B cell (primary cell): ENCODE measurements at regions of chr5 and their contacts with region 1.

Region 1: DNA sequence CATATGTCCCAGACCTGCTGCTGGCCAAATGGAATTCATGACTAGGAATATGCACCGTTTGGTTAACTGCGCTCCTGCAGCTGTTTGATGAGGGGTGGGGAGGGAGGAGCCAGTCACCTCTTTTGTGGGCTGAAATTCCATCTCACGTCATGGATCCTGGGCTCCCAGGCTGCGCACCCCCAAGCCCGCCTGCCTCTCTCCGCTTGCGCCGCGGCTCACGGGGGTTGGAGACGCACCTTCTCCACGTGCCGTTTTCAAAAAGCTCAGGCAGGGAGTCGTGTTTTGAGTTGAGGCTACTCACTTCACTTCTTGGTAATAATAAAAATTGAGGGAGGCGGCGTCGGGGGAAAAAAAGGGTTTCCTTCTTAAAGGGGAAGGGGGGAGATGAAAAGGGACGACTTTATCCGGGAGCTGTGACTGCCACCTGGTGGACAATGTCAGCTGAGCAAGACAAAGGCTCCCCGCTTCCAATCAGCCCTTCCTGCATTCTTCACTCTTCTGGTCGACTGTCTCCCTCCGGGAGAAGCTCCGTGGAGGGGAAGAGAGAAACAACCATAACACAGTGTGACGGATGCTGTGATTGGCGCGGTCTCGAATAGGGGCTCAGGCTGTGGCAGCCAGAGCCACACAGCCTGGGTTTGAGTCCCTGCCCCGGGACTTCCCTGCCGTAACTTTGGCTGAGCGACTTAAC is 15.9 kb upstream of the C5orf47 start:
- DNase-seq: peak; percentile 87
- ATAC-seq: peak; percentile 85
- H3K4me3 ChIP-seq: peak overlapping the region in 4 of 5 experiments; percentile 14 to 50 (median 40)
- H3K4me3 Mint-ChIP-seq: peak overlapping the region; percentile 85
- H3K27ac ChIP-seq: no peak overlapping the region
- H3K27ac Mint-ChIP-seq: no peak overlapping the region
- H3K4me1 ChIP-seq: peaks cover 13 to 14% of the 10 kb centered on the region in 2 donors
- H3K4me1 Mint-ChIP-seq: peaks cover 11% of the 10 kb centered on the region
- H3K27me3 ChIP-seq: peaks cover 0 to 7% (median 3%) of the 10 kb centered on the region in 4 experiments
- H3K27me3 Mint-ChIP-seq: peaks cover 27% of the 10 kb centered on the region
- CTCF ChIP-seq: peak; percentile 87

Region 2: DNA sequence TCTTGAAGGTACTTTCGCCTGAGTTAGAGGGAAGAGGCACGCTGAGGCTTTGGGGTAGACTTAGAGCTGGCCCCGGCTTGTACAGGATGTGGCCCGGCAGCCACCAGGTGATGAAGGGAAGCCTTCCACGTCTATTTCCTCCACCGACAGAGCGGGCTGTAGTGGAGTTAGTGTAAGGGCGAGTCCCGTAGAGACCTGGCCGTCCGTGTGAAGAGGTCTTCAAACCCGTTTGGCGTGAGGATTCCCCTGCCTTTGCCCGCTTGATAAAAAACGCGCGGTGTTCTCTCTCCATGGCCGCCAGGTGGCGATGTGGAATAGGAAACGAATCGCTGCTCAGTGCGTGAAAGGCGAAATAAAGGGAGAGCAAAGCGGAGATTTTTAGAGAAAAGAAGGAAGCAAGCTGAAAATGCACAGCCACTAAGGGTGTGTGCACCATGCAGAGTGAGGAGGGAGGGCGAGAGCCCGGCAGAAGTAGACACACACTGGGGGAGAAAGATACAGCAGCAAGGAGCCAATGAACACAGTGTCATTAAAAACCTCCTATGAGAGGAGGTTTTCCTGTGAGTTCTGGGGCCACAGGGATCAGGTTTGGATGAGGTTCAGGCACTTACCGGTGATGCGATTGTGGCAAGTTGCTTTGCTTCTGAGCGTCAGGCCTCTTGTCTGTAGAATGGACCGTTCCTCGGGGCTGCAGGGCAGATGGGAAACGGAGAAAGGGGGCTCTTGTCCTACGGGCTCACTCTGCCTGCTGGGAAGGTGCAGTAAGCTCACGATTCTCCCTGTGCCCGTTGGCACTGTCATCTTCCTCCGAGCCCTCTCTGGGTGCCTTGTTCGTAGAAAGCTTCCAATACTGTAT is 679.0 kb before region 1 on chr5:
- CTCF ChIA-PET with region 1: interaction called, 26 read pairs
- POLR2A ChIA-PET with region 1: no interaction called
- intact Hi-C with region 1: no loop called
- DNase-seq: peak; percentile 70
- ATAC-seq: peak; percentile 53
- H3K4me3 ChIP-seq: no peak overlapping the region
- H3K4me3 Mint-ChIP-seq: peak overlapping the region; percentile 8
- H3K27ac ChIP-seq: no peak overlapping the region
- H3K27ac Mint-ChIP-seq: no peak overlapping the region
- H3K4me1 ChIP-seq: peaks cover 11 to 12% of the 10 kb centered on the region in 2 donors
- H3K4me1 Mint-ChIP-seq: peaks cover 10% of the 10 kb centered on the region
- H3K27me3 ChIP-seq: peaks cover 0 to 30% (median 14%) of the 10 kb centered on the region in 4 experiments
- H3K27me3 Mint-ChIP-seq: peaks cover 46% of the 10 kb centered on the region
- CTCF ChIP-seq: peak; percentile 88

Region 3: DNA sequence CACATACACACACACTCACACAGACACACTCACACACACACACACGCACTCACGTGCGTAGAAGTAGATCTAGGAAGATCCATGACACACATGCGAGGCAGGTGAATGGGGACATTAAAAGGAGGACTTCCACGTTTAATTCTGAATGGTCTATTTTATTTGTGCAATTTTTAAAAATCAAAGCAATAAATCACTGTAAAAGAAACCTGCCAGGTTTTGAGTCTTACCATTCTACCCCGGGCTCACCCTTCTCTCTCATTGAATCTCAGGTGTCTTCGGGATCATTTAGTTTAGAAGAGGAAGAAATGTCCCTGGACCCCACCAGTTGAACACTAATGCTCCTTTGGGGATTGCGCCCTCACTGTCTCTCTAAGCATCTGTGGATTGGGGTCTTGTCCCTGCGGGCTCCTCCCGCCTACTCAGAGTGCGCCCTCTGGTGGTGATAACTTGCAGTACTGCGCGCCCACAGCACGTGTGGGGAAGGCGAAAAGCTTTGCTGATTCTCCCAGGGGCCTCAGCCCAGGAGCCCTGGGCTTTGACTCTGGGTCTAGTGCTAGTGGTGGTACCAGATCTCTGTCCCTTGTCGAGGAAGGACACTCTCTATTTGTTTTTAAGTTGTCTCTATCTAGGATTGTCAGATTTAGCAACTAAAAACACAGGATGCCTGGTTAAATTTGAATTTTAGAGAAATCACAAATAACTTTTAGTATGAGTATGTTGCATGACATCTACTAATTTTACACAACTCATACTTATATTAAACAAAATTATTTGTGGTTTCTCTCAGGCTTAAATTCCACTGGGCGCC is 391.5 kb before region 1 on chr5:
- CTCF ChIA-PET with region 1: no interaction called
- POLR2A ChIA-PET with region 1: no interaction called
- intact Hi-C with region 1: no loop called
- DNase-seq: peak; percentile 38
- ATAC-seq: no peak
- H3K4me3 ChIP-seq: no peak overlapping the region
- H3K4me3 Mint-ChIP-seq: no peak overlapping the region
- H3K27ac ChIP-seq: no peak overlapping the region
- H3K27ac Mint-ChIP-seq: no peak overlapping the region
- H3K4me1 ChIP-seq: no peaks in the 10 kb centered on the region
- H3K4me1 Mint-ChIP-seq: no peaks in the 10 kb centered on the region
- H3K27me3 ChIP-seq: no peaks in the 10 kb centered on the region
- H3K27me3 Mint-ChIP-seq: peaks cover 19% of the 10 kb centered on the region
- CTCF ChIP-seq: peak; percentile 68

Region 4: GRCh38 chr5:173625696-173626504 is 347.2 kb before region 1 on chr5:
- CTCF ChIA-PET with region 1: interaction called, 201 read pairs
- POLR2A ChIA-PET with region 1: no interaction called
- intact Hi-C with region 1: no loop called
- DNase-seq: peak; percentile 63
- ATAC-seq: peak; percentile 89
- H3K4me3 ChIP-seq: no peak overlapping the region
- H3K4me3 Mint-ChIP-seq: peak overlapping the region; percentile 50
- H3K27ac ChIP-seq: no peak overlapping the region
- H3K27ac Mint-ChIP-seq: peak overlapping the region; percentile 18
- H3K4me1 ChIP-seq: peaks cover 7 to 12% of the 10 kb centered on the region in 2 donors
- H3K4me1 Mint-ChIP-seq: peaks cover 15% of the 10 kb centered on the region
- H3K27me3 ChIP-seq: no peaks in the 10 kb centered on the region
- H3K27me3 Mint-ChIP-seq: no peaks in the 10 kb centered on the region
- CTCF ChIP-seq: peak; percentile 40

Region 5: DNA sequence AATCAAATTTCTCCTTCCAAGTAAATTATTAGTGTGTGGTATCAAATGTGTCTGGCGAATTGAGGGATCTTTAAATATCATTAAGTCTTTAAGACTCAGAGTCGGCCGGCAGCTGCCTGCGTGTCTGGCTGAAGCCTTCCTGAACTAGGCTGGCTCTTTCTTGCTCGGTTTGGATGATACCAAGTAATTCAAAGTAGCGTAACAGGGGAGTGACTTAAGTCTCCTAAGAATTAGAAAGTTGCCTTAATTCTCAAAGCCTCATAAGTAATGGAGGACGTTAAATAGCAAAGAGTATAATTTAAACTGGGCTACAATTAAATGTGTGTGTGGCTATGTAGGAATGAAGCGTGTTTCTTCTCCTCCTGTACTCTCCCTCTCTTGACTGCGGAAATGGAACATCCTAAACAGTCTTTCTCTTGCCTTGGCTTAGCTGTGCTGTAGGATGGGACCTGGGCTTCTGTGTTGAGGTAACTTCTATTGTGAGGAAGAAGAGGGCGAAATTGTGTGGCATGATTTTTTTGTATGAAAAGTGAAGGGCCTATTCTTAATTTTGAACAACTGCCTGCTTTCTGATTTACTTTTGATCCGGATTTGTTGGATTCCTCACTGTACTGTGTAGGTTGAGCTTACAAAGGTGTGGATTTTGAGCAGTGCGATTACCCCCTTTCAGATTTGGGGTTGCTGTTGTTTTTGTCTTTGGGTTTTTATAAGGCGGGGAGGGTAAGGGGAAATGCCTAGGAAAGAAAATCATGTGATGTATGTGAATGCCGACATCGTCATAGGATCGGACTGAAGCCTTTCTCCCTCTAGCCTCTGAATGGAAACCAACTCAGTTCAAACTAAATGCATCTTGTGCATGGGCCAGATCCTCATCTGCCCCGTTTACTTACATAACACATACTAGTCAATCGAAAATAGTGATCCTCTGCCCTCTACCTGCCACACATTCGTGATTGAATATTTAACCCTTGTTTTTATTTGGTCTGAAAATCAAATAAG is 55.0 kb before region 1 on chr5:
- CTCF ChIA-PET with region 1: interaction called, 41 read pairs
- POLR2A ChIA-PET with region 1: no interaction called
- intact Hi-C with region 1: loop called (anchors 5 kb)
- DNase-seq: peak; percentile 92
- ATAC-seq: peak; percentile 89
- H3K4me3 ChIP-seq: peak overlapping the region; percentile 43 to 81 (median 62)
- H3K4me3 Mint-ChIP-seq: no peak overlapping the region
- H3K27ac ChIP-seq: peak overlapping the region; percentile 82 to 95
- H3K27ac Mint-ChIP-seq: no peak overlapping the region
- H3K4me1 ChIP-seq: peaks cover 18 to 24% of the 10 kb centered on the region in 2 donors
- H3K4me1 Mint-ChIP-seq: peaks cover 22% of the 10 kb centered on the region
- H3K27me3 ChIP-seq: no peaks in the 10 kb centered on the region
- H3K27me3 Mint-ChIP-seq: no peaks in the 10 kb centered on the region
- CTCF ChIP-seq: no peak

Region 6: DNA sequence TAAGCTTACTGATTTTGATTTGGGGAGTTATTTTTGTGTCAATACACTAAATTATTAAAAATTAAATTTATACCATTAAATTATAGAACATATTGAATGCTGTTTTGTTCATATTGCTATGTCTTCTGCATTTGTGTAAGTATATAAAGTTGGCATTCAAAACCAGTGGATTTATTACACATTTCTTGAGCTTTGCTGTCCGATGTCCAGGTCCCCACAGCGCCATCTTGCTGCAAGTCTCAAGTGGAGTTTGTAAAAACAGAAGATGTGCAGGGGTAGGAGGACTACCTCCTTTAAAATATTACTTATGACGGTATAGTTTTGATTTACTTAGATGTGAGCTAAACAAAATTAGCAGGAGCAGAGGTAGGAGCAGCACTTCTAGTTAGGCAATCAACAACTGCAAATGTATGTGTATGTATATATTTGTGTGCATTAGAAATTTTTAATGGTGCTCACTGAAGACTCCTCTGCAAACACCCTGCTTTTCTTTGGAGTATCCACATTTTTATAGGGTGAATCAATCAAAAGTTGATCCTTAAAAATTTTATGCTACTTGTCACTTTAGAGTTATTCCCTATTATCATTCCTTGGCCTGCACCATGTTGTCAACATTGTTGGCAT is 47.5 kb before region 1 on chr5:
- CTCF ChIA-PET with region 1: interaction called, 41 read pairs
- POLR2A ChIA-PET with region 1: no interaction called
- intact Hi-C with region 1: no loop called
- DNase-seq: peak; percentile 68
- ATAC-seq: no peak
- H3K4me3 ChIP-seq: no peak overlapping the region
- H3K4me3 Mint-ChIP-seq: no peak overlapping the region
- H3K27ac ChIP-seq: no peak overlapping the region
- H3K27ac Mint-ChIP-seq: no peak overlapping the region
- H3K4me1 ChIP-seq: peaks cover 6 to 8% of the 10 kb centered on the region in 2 donors
- H3K4me1 Mint-ChIP-seq: peaks cover 27% of the 10 kb centered on the region
- H3K27me3 ChIP-seq: no peaks in the 10 kb centered on the region
- H3K27me3 Mint-ChIP-seq: no peaks in the 10 kb centered on the region
- CTCF ChIP-seq: peak; percentile 74

Region 7: GRCh38 chr5:173984218-173984617 is 11.1 kb after region 1 on chr5:
- CTCF ChIA-PET with region 1: interaction called, 13 read pairs
- POLR2A ChIA-PET with region 1: no interaction called
- intact Hi-C with region 1: no loop called
- DNase-seq: no peak
- ATAC-seq: no peak
- H3K4me3 ChIP-seq: no peak overlapping the region
- H3K4me3 Mint-ChIP-seq: no peak overlapping the region
- H3K27ac ChIP-seq: no peak overlapping the region
- H3K27ac Mint-ChIP-seq: no peak overlapping the region
- H3K4me1 ChIP-seq: no peaks in the 10 kb centered on the region
- H3K4me1 Mint-ChIP-seq: no peaks in the 10 kb centered on the region
- H3K27me3 ChIP-seq: peaks cover 0 to 20% (median 9%) of the 10 kb centered on the region in 4 experiments
- H3K27me3 Mint-ChIP-seq: peaks cover 51% of the 10 kb centered on the region
- CTCF ChIP-seq: no peak

Region 8: GRCh38 chr5:174172152-174172551 is 199.1 kb after region 1 on chr5:
- CTCF ChIA-PET with region 1: no interaction called
- POLR2A ChIA-PET with region 1: no interaction called
- intact Hi-C with region 1: no loop called
- DNase-seq: no peak
- ATAC-seq: no peak
- H3K4me3 ChIP-seq: no peak overlapping the region
- H3K4me3 Mint-ChIP-seq: no peak overlapping the region
- H3K27ac ChIP-seq: no peak overlapping the region
- H3K27ac Mint-ChIP-seq: no peak overlapping the region
- H3K4me1 ChIP-seq: no peaks in the 10 kb centered on the region
- H3K4me1 Mint-ChIP-seq: no peaks in the 10 kb centered on the region
- H3K27me3 ChIP-seq: peaks cover 0 to 9% (median 0%) of the 10 kb centered on the region in 4 experiments
- H3K27me3 Mint-ChIP-seq: peaks cover 13% of the 10 kb centered on the region
- CTCF ChIP-seq: no peak